ENCODE measurements at regions of chr6 and their contacts with region 1.

Region 1: DNA sequence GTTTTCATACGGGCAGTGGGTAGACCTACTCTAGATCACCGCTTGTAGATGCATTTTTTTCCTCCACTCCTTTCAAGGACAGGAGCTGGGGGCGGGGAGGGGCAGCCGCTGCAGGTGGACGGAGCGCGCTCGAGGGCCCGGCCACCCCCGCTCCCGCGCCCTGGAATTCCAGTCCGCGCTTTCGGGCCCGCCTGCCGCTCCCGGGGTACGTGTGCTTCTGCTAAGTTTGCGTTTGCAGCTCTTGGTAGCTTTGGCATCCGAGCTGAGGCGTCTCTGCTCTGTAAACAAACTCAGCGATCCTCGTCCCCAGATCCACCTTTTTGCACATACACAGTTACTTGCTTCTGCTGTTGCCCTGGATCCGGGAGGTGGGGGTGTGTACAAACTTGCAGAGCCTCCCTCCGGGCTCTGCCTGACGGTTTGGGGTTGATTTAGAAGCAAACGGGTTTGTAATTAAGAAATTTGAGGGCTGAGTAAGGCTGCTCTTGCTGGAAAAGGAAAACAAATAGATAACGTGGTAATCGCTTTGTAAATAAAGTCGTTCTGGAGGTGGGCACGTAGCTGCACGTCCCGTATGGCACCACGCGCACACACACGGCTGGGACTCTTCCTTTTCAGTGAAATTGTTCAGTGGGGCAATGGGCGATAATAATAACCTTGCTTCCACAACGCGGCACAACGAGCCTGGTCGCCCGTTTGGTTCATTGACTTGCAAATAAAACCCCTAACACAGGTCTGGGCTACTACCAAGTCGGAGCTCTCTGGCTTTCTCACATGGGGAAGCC is 976 bp upstream of the CITED2 start:
- DNase-seq: peak; percentile 70 to 91 (median 88)
- ATAC-seq: peak; percentile 68
- H3K4me3 ChIP-seq: peak overlapping the region; percentile 71
- H3K4me3 Mint-ChIP-seq: peak overlapping the region; percentile 95 to 100 (median 100)
- H3K27ac ChIP-seq: peak overlapping the region; percentile 82
- H3K27ac Mint-ChIP-seq: peak overlapping the region; percentile 95 to 100 (median 98)
- H3K4me1 ChIP-seq: peaks cover 20 to 26% of the 10 kb centered on the region in 2 donors
- H3K4me1 Mint-ChIP-seq: peaks cover 21 to 38% (median 26%) of the 10 kb centered on the region in 7 donors
- H3K27me3 ChIP-seq: no peaks in the 10 kb centered on the region
- H3K27me3 Mint-ChIP-seq: no peaks in the 10 kb centered on the region

Region 2: DNA sequence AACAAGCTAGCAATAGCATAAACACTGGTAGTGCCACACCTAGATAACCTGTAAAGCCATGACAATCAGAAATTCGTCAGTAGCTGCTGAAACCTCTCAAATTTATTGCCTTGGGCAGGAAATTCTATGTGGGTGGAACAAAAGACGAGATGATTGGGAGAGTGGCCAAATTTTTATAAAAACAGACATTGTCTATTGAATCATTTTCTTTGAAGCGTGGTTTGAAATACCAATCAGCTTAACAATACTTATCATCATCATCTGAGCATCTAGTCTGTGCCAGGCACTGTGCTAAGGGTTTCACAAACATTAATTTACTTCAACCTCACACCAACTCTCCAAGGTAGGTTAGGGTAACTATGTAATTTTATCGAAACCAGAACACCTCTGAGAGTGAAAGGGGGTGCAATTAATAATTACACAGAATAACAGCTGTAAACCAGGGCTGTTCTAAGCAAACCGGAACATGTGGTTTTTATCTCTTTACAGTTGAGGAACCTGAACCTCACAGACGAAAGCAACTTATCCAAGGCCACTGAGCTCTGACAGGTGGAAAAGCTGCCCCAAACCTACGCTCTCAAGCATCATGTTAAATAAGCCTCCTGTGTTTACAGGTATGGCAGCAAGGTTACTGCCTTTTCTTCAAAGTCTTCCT is 919.6 kb before region 1 on chr6:
- CTCF ChIA-PET with region 1: no interaction called
- POLR2A ChIA-PET with region 1: interaction called, 6 read pairs
- intact Hi-C with region 1: loop called in 1 of 2 experiments (anchors 5 kb)
- DNase-seq: peak in 7 of 9 donors; percentile 51 to 81 (median 75)
- ATAC-seq: peak; percentile 86
- H3K4me3 ChIP-seq: peak overlapping the region; percentile 48
- H3K4me3 Mint-ChIP-seq: peak overlapping the region; percentile 40 to 79 (median 70)
- H3K27ac ChIP-seq: peak overlapping the region; percentile 75
- H3K27ac Mint-ChIP-seq: peak overlapping the region; percentile 77 to 97 (median 93)
- H3K4me1 ChIP-seq: peaks cover 19 to 22% of the 10 kb centered on the region in 2 donors
- H3K4me1 Mint-ChIP-seq: peaks cover 5 to 32% (median 22%) of the 10 kb centered on the region in 7 donors
- H3K27me3 ChIP-seq: no peaks in the 10 kb centered on the region
- H3K27me3 Mint-ChIP-seq: peaks cover 0 to 3% (median 0%) of the 10 kb centered on the region in 5 donors

Region 3: GRCh38 chr6:139109558-139109957 is 265.9 kb before region 1 on chr6:
- CTCF ChIA-PET with region 1: no interaction called
- POLR2A ChIA-PET with region 1: interaction called, 57 read pairs
- intact Hi-C with region 1: no loop called
- DNase-seq: peak in 2 of 9 donors; percentile 21 to 28
- ATAC-seq: no peak
- H3K4me3 ChIP-seq: no peak overlapping the region
- H3K4me3 Mint-ChIP-seq: peak overlapping the region in 2 of 10 donors; percentile 6 to 36
- H3K27ac ChIP-seq: no peak overlapping the region
- H3K27ac Mint-ChIP-seq: peak overlapping the region in 8 of 9 donors; percentile 38 to 94 (median 86)
- H3K4me1 ChIP-seq: peaks cover 36 to 48% of the 10 kb centered on the region in 2 donors
- H3K4me1 Mint-ChIP-seq: peaks cover 17 to 74% (median 59%) of the 10 kb centered on the region in 7 donors
- H3K27me3 ChIP-seq: no peaks in the 10 kb centered on the region
- H3K27me3 Mint-ChIP-seq: no peaks in the 10 kb centered on the region

Region 4: DNA sequence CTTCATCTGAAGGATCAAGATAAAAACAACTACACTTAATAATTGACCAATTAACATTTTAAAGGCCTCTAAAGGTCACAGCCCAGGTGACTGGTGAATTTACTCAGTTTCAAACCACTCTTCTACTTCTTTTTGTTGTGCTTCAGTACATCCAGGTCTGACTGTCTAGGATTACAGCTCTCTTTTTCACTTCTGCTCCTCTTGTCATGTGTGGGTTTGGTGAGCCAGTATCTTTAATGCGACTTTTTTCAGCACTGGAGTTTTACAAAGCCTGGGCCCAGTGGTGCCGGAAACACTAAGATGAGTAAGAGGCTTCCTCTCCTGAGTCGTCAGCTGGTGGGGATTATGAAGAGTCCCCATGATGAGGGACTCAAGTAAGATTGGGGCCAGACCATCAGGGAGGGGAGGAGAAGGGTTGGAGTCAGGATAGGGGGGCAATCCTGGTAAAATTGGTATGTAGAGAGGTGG is 213.6 kb before region 1 on chr6:
- CTCF ChIA-PET with region 1: interaction called, 7 read pairs
- POLR2A ChIA-PET with region 1: interaction called, 30 read pairs
- intact Hi-C with region 1: loop called in 1 of 2 experiments (anchors 1 kb)
- DNase-seq: peak in 8 of 9 donors; percentile 59 to 78 (median 73)
- ATAC-seq: peak; percentile 64
- H3K4me3 ChIP-seq: peak overlapping the region; percentile 11
- H3K4me3 Mint-ChIP-seq: peak overlapping the region; percentile 79 to 88 (median 83)
- H3K27ac ChIP-seq: peak overlapping the region; percentile 75
- H3K27ac Mint-ChIP-seq: peak overlapping the region; percentile 86 to 98 (median 91)
- H3K4me1 ChIP-seq: peaks cover 81 to 85% of the 10 kb centered on the region in 2 donors
- H3K4me1 Mint-ChIP-seq: peaks cover 70 to 96% (median 86%) of the 10 kb centered on the region in 7 donors
- H3K27me3 ChIP-seq: no peaks in the 10 kb centered on the region
- H3K27me3 Mint-ChIP-seq: no peaks in the 10 kb centered on the region

Region 5: DNA sequence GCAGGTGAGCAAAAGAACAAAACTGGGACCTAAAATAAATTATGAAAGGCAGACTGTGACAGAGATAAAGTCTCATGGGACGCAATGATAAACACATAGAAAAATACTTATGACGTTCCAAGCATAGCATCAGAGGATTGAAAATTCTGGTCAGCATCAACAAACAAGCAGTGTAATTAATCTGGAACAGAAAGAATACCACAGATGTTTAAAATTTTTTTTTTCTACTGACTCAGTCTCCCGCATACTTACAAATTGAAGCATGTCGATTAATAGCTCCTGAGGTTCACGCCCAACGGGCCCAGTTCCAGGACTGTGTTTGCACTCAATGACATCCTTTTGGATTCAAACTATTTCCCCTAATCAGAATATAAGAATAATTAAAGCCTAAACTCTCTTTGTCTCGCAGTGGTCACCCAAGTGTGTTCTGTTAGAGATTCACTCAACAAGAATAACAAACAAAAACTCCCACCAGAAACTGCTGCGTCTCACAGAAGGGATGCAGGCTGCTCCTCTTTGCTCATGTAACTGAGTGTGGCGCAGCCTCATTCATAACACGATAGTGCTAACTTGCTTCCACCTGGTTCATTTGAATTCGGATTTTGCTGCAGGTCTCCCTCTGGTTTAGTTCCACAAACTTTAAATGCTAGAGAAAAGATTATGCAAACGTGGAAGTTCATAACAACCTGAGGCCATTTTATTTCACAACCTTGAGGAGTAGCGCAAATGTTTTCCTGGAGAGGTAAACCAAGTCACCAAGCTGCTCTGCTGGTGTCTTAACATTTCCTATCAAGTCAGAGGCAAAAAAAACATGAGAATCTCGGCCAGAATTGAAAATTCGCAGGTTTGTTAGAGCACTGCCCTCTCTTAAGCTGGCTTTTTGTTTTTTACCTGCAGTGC is 68.1 kb after region 1 on chr6:
- CTCF ChIA-PET with region 1: no interaction called
- POLR2A ChIA-PET with region 1: no interaction called
- intact Hi-C with region 1: loop called in 1 of 2 experiments (anchors 2 kb)
- DNase-seq: no peak
- ATAC-seq: no peak
- H3K4me3 ChIP-seq: no peak overlapping the region
- H3K4me3 Mint-ChIP-seq: no peak overlapping the region
- H3K27ac ChIP-seq: no peak overlapping the region
- H3K27ac Mint-ChIP-seq: no peak overlapping the region
- H3K4me1 ChIP-seq: no peaks in the 10 kb centered on the region
- H3K4me1 Mint-ChIP-seq: peaks cover 0 to 43% (median 0%) of the 10 kb centered on the region in 7 donors
- H3K27me3 ChIP-seq: no peaks in the 10 kb centered on the region
- H3K27me3 Mint-ChIP-seq: peaks cover 0 to 6% (median 3%) of the 10 kb centered on the region in 5 donors

Region 6: GRCh38 chr6:139881728-139882211 is 506.3 kb after region 1 on chr6:
- CTCF ChIA-PET with region 1: no interaction called
- POLR2A ChIA-PET with region 1: no interaction called
- intact Hi-C with region 1: loop called (anchors 5 kb)
- DNase-seq: peak in 5 of 9 donors; percentile 7 to 20 (median 14)
- ATAC-seq: peak; percentile 58
- H3K4me3 ChIP-seq: no peak overlapping the region
- H3K4me3 Mint-ChIP-seq: peak overlapping the region in 3 of 10 donors; percentile 11 to 41 (median 34)
- H3K27ac ChIP-seq: no peak overlapping the region
- H3K27ac Mint-ChIP-seq: peak overlapping the region in 1 of 9 donors; percentile 22
- H3K4me1 ChIP-seq: no peaks in the 10 kb centered on the region
- H3K4me1 Mint-ChIP-seq: peaks cover 0 to 12% (median 2%) of the 10 kb centered on the region in 7 donors
- H3K27me3 ChIP-seq: no peaks in the 10 kb centered on the region
- H3K27me3 Mint-ChIP-seq: peaks cover 0 to 19% (median 13%) of the 10 kb centered on the region in 5 donors

Region 7: GRCh38 chr6:139990856-139991465 is 615.5 kb after region 1 on chr6:
- CTCF ChIA-PET with region 1: no interaction called
- POLR2A ChIA-PET with region 1: no interaction called
- intact Hi-C with region 1: no loop called
- DNase-seq: no peak
- ATAC-seq: no peak
- H3K4me3 ChIP-seq: no peak overlapping the region
- H3K4me3 Mint-ChIP-seq: no peak overlapping the region
- H3K27ac ChIP-seq: no peak overlapping the region
- H3K27ac Mint-ChIP-seq: no peak overlapping the region
- H3K4me1 ChIP-seq: no peaks in the 10 kb centered on the region
- H3K4me1 Mint-ChIP-seq: no peaks in the 10 kb centered on the region
- H3K27me3 ChIP-seq: no peaks in the 10 kb centered on the region
- H3K27me3 Mint-ChIP-seq: peaks cover 0 to 2% (median 0%) of the 10 kb centered on the region in 5 donors

Region 8: DNA sequence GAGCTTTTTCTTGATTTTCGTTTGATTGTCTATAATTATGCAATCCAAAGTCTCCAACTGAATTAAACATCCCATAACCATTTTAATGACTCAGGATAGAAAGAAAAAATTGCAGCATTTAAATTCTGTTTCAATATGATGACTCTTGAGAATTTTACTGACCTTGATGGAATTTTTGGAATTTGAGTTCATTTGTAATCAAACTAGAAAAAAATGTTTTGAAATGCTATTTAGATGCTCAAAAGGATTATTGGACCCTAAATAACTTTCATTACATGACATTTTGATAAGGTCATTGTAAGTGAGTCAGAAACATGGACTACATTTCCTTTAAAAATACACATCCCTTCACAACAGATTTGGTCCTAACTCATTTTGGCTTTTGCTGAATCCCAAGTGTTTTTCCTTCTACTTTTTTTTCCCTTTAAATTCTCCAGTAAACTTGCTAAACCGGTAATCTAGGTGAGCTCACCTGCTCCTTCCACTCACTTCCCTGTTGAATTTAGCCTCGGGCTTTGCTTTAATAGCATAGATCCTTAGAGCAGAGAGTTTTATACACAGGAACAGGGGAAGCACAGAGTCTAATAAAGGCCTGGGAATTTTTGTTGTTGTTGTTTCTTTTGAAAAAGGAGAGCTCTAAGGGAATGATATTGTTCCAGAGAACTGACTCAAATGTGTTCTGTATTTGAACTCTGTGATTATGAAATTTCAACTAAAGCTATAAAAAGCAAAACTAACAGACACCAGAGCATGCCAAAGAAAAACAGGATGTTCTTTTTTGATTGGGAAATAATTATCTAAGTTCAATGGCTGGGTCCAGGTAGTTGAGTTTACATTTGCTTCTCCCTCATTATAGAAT is 1087.3 kb after region 1 on chr6:
- CTCF ChIA-PET with region 1: no interaction called
- POLR2A ChIA-PET with region 1: no interaction called
- intact Hi-C with region 1: no loop called
- DNase-seq: no peak
- ATAC-seq: no peak
- H3K4me3 ChIP-seq: no peak overlapping the region
- H3K4me3 Mint-ChIP-seq: no peak overlapping the region
- H3K27ac ChIP-seq: no peak overlapping the region
- H3K27ac Mint-ChIP-seq: no peak overlapping the region
- H3K4me1 ChIP-seq: no peaks in the 10 kb centered on the region
- H3K4me1 Mint-ChIP-seq: no peaks in the 10 kb centered on the region
- H3K27me3 ChIP-seq: no peaks in the 10 kb centered on the region
- H3K27me3 Mint-ChIP-seq: peaks cover 2 to 19% (median 12%) of the 10 kb centered on the region in 5 donors

Measured in naive thymus-derived CD4-positive, alpha-beta T cell (primary cell).